ENCODE measurements at regions of chr3 and their contacts with region 1.

Region 1: DNA sequence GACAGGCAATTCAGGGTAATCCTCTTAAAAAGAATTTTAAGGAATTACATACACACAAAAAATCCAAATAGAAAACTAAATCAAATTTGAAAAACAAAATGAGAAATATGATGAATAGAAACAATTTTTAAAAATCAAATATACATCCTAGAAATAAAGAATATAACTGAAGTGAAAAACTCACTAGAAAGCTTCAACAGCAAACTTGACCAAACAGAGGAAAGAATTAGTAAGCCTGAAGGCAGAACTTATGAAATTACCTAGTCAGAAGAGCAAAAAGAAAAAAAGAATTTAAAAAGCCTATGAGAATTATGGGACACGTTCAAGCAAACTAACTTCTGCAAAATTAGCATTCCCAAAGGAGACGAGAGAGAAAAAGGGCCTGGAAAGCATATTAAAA is 206.1 kb downstream of the PCCB start:
- DNase-seq: no peak
- H3K4me3 ChIP-seq: no peak overlapping the region
- CTCF ChIP-seq: no peak
- POLR2A ChIP-seq: no peak

Region 2: DNA sequence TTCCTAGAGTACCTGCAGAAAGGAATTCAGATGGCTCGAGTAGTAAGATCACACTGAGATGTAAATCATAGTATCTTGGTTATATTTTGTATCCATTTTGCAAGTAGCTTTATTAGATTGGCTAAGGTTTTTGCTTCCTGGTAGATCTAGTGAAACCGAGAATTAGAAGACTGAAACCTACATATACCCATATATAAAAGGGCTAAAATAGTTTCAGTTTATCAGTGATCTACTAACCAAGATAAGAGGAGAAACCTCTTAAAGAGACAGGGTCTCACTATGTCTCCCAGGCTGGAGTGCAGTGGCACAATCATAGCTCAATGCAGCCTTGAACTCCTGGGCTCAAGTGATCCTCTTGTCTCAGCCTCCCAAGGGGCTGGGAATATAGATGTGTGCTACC is 70.7 kb before region 1 on chr3:
- intact Hi-C with region 1: no loop called
- DNase-seq: no peak
- H3K4me3 ChIP-seq: no peak overlapping the region
- CTCF ChIP-seq: no peak
- POLR2A ChIP-seq: no peak

Region 3: GRCh38 chr3:136490646-136491405 is 34.6 kb after region 1 on chr3:
- intact Hi-C with region 1: loop called (anchors 1 kb)
- DNase-seq: no peak
- H3K4me3 ChIP-seq: no peak overlapping the region
- CTCF ChIP-seq: no peak
- POLR2A ChIP-seq: no peak

Region 4: GRCh38 chr3:137304313-137305056 is 848.3 kb after region 1 on chr3:
- intact Hi-C with region 1: no loop called
- DNase-seq: no peak
- H3K4me3 ChIP-seq: no peak overlapping the region
- CTCF ChIP-seq: no peak
- POLR2A ChIP-seq: no peak

Measured in lower leg skin (tissue), 4 donors.